Activated CD4-positive, alpha-beta memory T cell treated with anti-CD3 and anti-CD28 coated beads for 36 hours (primary cell): ENCODE measurements at regions of chr1 and their contacts with region 1.

Region 1: GRCh38 chr1:145823565-145824498 is at the starts of genes POLR3C and RNF115:
- DNase-seq: peak; percentile 89
- H3K4me3 Mint-ChIP-seq: peak within 1 kb of the TSS; percentile 96
- H3K27ac Mint-ChIP-seq: peak within 1 kb of the TSS; percentile 95
- H3K4me1 Mint-ChIP-seq: peaks cover 47% of the 10 kb centered on the region
- H3K27me3 Mint-ChIP-seq: no peaks in the 10 kb centered on the region
- total RNA-seq, gene POLR3C: 27.3 to 28.9 TPM
- total RNA-seq, gene RNF115: 10.1 TPM

Region 2: DNA sequence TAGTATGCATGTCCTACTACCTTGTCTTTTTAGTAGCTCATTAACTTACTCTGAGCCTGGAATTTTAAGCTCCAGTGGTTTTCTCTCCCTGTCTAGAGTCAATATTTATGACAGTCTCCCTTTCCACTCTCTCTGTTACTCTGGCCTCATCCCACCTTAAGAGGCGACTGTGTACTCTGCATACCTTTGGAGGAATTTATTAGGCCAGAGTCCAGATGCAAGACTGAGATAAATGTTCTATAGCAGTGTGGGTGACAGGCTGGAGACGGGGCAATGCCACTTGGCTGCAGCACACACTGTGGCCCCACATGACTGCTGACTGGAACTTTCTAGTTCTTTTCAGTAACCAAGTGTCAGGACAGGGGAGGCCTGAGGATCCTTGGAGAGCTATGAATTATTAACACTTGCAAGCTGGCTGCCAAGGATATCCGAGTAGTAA is 112.6 kb before region 1 on chr1:
- CTCF ChIA-PET with region 1: no interaction called
- POLR2A ChIA-PET with region 1: no interaction called
- intact Hi-C with region 1: no loop called
- DNase-seq: no peak
- H3K4me3 Mint-ChIP-seq: no peak overlapping the region
- H3K27ac Mint-ChIP-seq: no peak overlapping the region
- H3K4me1 Mint-ChIP-seq: no peaks in the 10 kb centered on the region
- H3K27me3 Mint-ChIP-seq: no peaks in the 10 kb centered on the region

Region 3: GRCh38 chr1:145782166-145783099 is 41.4 kb before region 1 on chr1:
- CTCF ChIA-PET with region 1: no interaction called
- POLR2A ChIA-PET with region 1: no interaction called
- intact Hi-C with region 1: loop called (anchors 5 kb)
- DNase-seq: no peak
- H3K4me3 Mint-ChIP-seq: no peak overlapping the region
- H3K27ac Mint-ChIP-seq: no peak overlapping the region
- H3K4me1 Mint-ChIP-seq: peaks cover 27% of the 10 kb centered on the region
- H3K27me3 Mint-ChIP-seq: no peaks in the 10 kb centered on the region

Region 4: GRCh38 chr1:145871994-145872924 is 48.4 kb after region 1 on chr1:
- CTCF ChIA-PET with region 1: no interaction called
- POLR2A ChIA-PET with region 1: no interaction called
- intact Hi-C with region 1: no loop called
- DNase-seq: peak; percentile 50
- H3K4me3 Mint-ChIP-seq: peak overlapping the region; percentile 70
- H3K27ac Mint-ChIP-seq: no peak overlapping the region
- H3K4me1 Mint-ChIP-seq: peaks cover 14% of the 10 kb centered on the region
- H3K27me3 Mint-ChIP-seq: no peaks in the 10 kb centered on the region

Region 5: DNA sequence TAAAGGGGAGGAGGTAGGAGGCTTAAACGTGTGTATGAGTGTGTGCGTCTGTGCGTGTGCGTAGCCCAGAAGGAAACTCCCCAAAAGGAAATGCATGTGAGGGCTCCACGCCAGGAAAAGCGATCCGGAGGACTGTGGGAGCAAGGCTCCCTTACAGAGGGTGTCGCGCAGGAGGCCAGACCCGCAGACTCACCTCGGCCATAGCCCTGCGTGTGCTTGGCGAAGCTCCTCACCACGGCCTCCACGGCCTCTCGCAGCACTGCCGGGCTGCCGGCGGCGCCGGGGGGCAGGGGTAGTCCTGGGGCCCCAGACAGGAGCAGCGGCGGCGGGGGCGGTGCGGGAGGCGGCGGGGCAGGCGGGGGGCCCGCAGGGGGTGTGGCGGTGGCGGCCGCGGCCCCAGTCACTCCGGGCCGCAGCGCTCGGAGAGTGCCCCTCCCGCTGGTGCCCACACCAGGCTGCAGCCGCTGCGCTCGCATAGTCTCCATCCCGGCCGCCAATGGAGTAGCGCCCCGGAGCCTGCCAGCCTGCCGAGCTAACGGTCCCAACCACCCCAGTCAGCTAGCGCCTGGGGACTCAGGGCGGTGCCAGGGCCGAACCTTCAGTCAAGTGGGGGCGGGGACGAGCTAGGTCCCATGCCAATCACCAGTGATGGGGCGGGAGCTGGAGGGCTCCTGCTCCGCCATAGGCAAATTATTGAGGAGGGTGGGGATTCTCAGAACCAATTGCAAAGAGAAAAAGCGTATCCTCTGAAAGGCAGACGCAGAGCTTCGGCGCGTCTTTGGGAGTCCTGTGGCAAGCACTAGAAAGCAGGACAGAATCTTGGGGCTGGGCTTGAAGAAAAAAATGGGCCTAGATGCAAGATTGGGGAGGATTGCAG is 133.8 kb after region 1 on chr1 and contains the start of gene LIX1L:
- CTCF ChIA-PET with region 1: no interaction called
- POLR2A ChIA-PET with region 1: interaction called, 4 read pairs
- intact Hi-C with region 1: loop called (anchors 5 kb)
- DNase-seq: peak; percentile 97
- H3K4me3 Mint-ChIP-seq: peak within 1 kb of the TSS; percentile 87
- H3K27ac Mint-ChIP-seq: peak within 1 kb of the TSS; percentile 79
- H3K4me1 Mint-ChIP-seq: peaks cover 57% of the 10 kb centered on the region
- H3K27me3 Mint-ChIP-seq: no peaks in the 10 kb centered on the region
- total RNA-seq, gene LIX1L: 46.6 to 47.8 TPM